Naive thymus-derived CD8-positive, alpha-beta T cell (primary cell): ENCODE measurements at regions of chr12 and their contacts with region 1.

Region 1: DNA sequence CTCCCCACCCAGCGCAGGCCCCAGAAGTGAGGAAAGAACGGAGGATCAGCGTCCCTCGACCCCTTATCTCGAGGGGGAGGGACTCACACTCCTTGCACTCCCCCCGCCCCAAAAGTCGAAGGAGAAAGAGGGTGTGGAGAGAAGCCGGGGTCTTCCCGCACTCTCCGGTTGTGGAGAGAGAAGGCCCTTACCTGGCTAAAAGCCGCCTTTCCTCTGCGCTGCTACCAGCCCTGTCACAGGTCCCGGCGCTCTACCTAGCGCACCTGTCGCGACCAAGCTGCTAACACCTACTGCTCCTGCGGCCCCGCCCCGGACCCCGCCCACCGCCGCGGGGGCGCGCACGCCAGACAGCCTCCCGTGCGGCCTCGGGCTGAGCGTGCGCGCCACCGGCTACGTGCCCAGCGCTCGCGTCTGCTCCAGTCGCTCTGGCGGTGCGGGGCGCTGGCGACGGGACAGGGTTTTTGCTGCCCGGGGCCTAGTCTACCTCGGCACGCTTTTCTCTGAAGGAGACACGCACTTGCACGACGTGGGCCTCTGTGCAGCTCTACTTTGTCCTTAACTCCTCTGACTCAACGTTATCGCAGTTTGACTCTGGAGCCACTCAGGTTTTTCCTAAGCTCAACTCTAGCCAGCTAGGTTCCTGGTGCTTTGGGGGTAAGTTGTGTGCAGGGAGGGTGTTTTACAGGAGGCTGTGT is at the start of gene LIMA1:
- DNase-seq: peak; percentile 85 to 98 (median 94)
- ATAC-seq: peak; percentile 91 to 93
- H3K4me3 Mint-ChIP-seq: peak within 1 kb of the TSS; percentile 87 to 97 (median 94)
- H3K27ac Mint-ChIP-seq: peak within 1 kb of the TSS; percentile 86 to 97 (median 95)
- H3K4me1 Mint-ChIP-seq: peaks cover 11 to 37% (median 24%) of the 10 kb centered on the region in 4 donors
- H3K27me3 Mint-ChIP-seq: no peaks in the 10 kb centered on the region
- polyA plus RNA-seq, gene LIMA1: 9.0 to 11.0 (median 9.6) TPM

Region 2: GRCh38 chr12:50211392-50212070 is 71.8 kb before region 1 on chr12:
- POLR2A ChIA-PET with region 1: interaction called, 16 read pairs
- DNase-seq: peak in 1 of 10 donors; percentile 20
- ATAC-seq: peak; percentile 63 to 67
- H3K4me3 Mint-ChIP-seq: peak overlapping the region; percentile 40 to 81 (median 72)
- H3K27ac Mint-ChIP-seq: peak overlapping the region; percentile 87 to 97 (median 94)
- H3K4me1 Mint-ChIP-seq: peaks cover 13 to 54% (median 41%) of the 10 kb centered on the region in 4 donors
- H3K27me3 Mint-ChIP-seq: no peaks in the 10 kb centered on the region

Region 3: DNA sequence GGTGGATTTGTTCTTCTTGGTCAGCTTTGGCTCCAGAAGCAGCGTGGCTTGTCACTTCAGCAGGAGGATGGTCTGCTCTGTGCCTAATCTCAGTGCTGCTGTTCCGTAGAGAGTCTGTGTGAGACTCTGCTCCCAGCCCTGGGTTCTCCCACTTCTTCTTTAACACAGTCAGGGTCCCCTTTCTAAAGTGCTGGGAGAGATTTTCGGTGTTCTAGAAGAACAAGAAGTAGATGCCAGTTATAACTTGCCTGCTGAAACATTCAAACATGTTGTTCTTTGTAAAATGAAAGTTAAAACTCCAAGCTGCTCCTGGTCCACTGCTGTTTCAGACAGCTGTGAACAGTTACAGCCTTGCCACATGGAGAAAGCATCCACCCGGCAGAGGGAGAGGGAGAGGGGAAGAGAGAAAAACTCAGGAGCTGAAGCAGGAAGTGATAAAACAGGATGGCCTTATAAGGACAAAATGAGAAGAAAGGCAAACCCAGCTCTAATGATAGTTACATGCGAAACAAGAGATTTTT is 61.0 kb before region 1 on chr12:
- POLR2A ChIA-PET with region 1: interaction called, 24 read pairs
- DNase-seq: peak in 4 of 10 donors; percentile 27 to 49 (median 40)
- ATAC-seq: peak; percentile 50 to 60
- H3K4me3 Mint-ChIP-seq: no peak overlapping the region
- H3K27ac Mint-ChIP-seq: no peak overlapping the region
- H3K4me1 Mint-ChIP-seq: peaks cover 11 to 45% (median 37%) of the 10 kb centered on the region in 4 donors
- H3K27me3 Mint-ChIP-seq: no peaks in the 10 kb centered on the region

Region 4: GRCh38 chr12:50326636-50327284 is 43.4 kb after region 1 on chr12:
- POLR2A ChIA-PET with region 1: no interaction called
- DNase-seq: no peak
- ATAC-seq: no peak
- H3K4me3 Mint-ChIP-seq: no peak overlapping the region
- H3K27ac Mint-ChIP-seq: peak overlapping the region in 1 of 10 donors; percentile 72
- H3K4me1 Mint-ChIP-seq: peaks cover 0 to 2% (median 0%) of the 10 kb centered on the region in 4 donors
- H3K27me3 Mint-ChIP-seq: no peaks in the 10 kb centered on the region